ENCODE measurements at regions of chr6 and their contacts with region 1.

Region 1: GRCh38 chr6:67433124-67433523 is 1202.0 kb upstream of the ADGRB3 start:
- DNase-seq: no peak
- H3K4me3 Mint-ChIP-seq: no peak overlapping the region
- H3K27ac Mint-ChIP-seq: no peak overlapping the region
- H3K4me1 Mint-ChIP-seq: no peaks in the 10 kb centered on the region
- H3K27me3 Mint-ChIP-seq: no peaks in the 10 kb centered on the region

Region 2: GRCh38 chr6:67736816-67737215 is 303.7 kb after region 1 on chr6:
- intact Hi-C with region 1: no loop called
- DNase-seq: no peak
- H3K4me3 Mint-ChIP-seq: no peak overlapping the region
- H3K27ac Mint-ChIP-seq: no peak overlapping the region
- H3K4me1 Mint-ChIP-seq: no peaks in the 10 kb centered on the region
- H3K27me3 Mint-ChIP-seq: no peaks in the 10 kb centered on the region

Region 3: DNA sequence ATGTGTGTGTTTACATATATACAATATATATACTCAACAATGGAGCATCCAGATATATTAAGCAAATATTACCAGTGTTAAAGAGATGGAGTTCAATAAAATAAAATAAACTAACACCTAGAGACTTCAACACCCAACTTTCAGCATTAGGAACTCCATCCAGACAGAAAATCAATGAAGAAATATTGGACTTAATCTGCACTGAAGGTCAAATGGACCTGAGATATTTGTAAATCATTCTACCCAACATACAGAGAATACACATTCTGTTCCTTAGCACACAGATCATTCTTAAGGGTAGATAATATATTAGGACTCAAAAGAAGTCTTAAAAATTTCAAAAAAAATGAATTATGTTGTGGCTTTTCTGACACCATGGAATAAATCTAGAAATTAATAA is 369.6 kb after region 1 on chr6:
- intact Hi-C with region 1: loop called (anchors 5 kb)
- DNase-seq: no peak
- H3K4me3 Mint-ChIP-seq: no peak overlapping the region
- H3K27ac Mint-ChIP-seq: no peak overlapping the region
- H3K4me1 Mint-ChIP-seq: no peaks in the 10 kb centered on the region
- H3K27me3 Mint-ChIP-seq: no peaks in the 10 kb centered on the region